Dorsolateral prefrontal cortex (tissue), 120 donors: ENCODE measurements at regions of chr1 and their contacts with region 1.

Region 1: DNA sequence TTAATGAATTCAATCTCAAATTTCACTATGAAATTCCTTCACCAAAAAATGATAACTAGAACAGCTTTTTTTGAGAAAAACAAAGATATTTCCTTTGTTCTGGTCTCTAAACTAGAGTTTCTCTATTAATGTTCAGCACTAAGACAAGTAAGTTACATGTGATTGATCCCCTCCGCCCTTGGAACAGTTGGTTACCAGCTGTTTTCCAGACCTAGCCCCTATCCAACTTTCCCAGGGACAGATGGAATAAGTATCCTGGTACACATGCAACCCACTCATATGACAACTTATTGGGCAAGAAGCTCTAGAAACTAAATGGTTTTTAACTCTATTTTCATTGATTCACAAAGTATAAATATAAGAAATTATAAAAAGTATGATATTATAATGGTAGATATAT is 140.4 kb downstream of the COP1 start:
- DNase-seq: no peak
- H3K4me3 ChIP-seq: no peak overlapping the region
- H3K27ac ChIP-seq: no peak overlapping the region
- H3K27me3 ChIP-seq: no peaks in the 10 kb centered on the region
- CTCF ChIP-seq: no peak

Region 2: GRCh38 chr1:175481126-175482066 is 585.3 kb before region 1 on chr1:
- intact Hi-C with region 1: loop called (anchors 5 kb)
- DNase-seq: no peak
- H3K4me3 ChIP-seq: no peak overlapping the region
- H3K27ac ChIP-seq: no peak overlapping the region
- H3K27me3 ChIP-seq: peaks cover 0 to 4% (median 0%) of the 10 kb centered on the region in 45 donors
- CTCF ChIP-seq: peak; percentile 39 to 77 (median 64)

Region 3: DNA sequence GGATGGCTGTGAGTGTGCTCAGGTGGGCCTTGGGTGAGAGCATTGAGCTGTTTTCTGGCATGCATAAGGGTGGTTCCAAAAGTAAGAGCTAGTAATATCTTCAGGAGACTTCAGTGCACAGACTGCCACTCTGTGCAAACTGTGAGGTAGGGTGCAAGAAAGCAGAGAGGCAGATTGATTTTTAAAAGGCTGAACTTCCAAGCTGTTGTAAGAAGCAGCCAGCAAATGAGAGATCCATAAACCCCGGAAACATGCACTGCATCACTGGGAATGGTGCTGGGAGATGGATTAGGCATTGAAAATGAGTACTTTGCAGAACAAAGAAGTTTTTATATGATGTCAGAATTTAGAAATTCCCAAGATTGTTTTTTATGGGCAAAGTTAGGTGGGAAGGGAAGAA is 578.8 kb before region 1 on chr1:
- intact Hi-C with region 1: loop called (anchors 5 kb)
- DNase-seq: no peak
- H3K4me3 ChIP-seq: no peak overlapping the region
- H3K27ac ChIP-seq: no peak overlapping the region
- H3K27me3 ChIP-seq: no peaks in the 10 kb centered on the region
- CTCF ChIP-seq: no peak

Region 4: GRCh38 chr1:176033474-176033873 is 33.2 kb before region 1 on chr1:
- intact Hi-C with region 1: no loop called
- DNase-seq: no peak
- H3K4me3 ChIP-seq: no peak overlapping the region
- H3K27ac ChIP-seq: no peak overlapping the region
- H3K27me3 ChIP-seq: no peaks in the 10 kb centered on the region
- CTCF ChIP-seq: no peak

Region 5: DNA sequence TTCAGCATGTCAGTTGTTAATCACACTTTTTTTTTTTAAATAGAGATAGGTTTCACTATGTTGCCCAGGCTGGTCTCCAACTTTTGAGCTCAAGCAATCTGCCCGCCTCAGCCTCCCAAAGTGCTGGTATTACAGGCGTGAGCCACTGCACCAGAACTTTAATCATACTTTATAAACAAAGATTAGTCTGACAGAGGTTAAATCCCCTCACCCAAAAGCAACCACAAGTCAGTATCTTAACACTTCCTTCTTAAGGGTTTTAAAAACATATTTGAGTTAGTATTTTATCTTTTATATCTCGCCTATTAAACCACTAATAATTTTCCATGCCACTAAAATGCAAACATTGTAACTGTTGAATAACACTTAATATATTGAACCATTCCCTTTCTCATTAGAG is 70.2 kb after region 1 on chr1:
- intact Hi-C with region 1: no loop called
- DNase-seq: no peak
- H3K4me3 ChIP-seq: no peak overlapping the region
- H3K27ac ChIP-seq: no peak overlapping the region
- H3K27me3 ChIP-seq: no peaks in the 10 kb centered on the region
- CTCF ChIP-seq: no peak